ENCODE measurements at regions of chr2 and their contacts with region 1.

Region 1: DNA sequence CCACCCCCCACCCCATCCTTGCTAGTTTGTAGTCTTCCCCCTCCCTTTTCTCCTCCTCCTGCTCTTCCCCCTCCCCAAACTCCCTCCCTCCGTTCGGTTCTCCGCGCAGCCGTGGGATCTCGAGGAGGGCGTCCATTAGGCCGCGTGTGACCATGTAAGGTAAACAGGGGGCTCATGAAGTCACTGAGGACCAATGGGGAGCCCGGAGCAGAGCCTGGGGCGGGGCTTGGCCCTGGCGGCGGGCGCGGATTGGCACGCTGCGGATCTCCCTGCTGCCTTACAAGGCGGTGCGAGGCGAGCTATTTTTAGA is 246 bp upstream of the KLF7 start:
- DNase-seq: peak; percentile 88
- ATAC-seq: peak; percentile 89
- H3K4me3 Mint-ChIP-seq: peak overlapping the region; percentile 95
- H3K27ac Mint-ChIP-seq: peak overlapping the region; percentile 95
- H3K4me1 Mint-ChIP-seq: peaks cover 63% of the 10 kb centered on the region
- H3K27me3 Mint-ChIP-seq: no peaks in the 10 kb centered on the region
- CTCF ChIP-seq: no peak

Region 2: GRCh38 chr2:206085742-206086445 is 1080.1 kb before region 1 on chr2 and contains the start of gene INO80D:
- CTCF ChIA-PET with region 1: no interaction called
- POLR2A ChIA-PET with region 1: interaction called, 3 read pairs
- intact Hi-C with region 1: loop called (anchors 10 kb)
- DNase-seq: peak; percentile 76
- ATAC-seq: peak; percentile 89
- H3K4me3 Mint-ChIP-seq: peak within 1 kb of the TSS; percentile 99
- H3K27ac Mint-ChIP-seq: peak within 1 kb of the TSS; percentile 100
- H3K4me1 Mint-ChIP-seq: peaks cover 42% of the 10 kb centered on the region
- H3K27me3 Mint-ChIP-seq: no peaks in the 10 kb centered on the region
- CTCF ChIP-seq: no peak
- total RNA-seq, gene INO80D: 52.1 and 53.1 TPM in 2 replicates

Region 3: GRCh38 chr2:206989306-206989705 is 176.7 kb before region 1 on chr2:
- CTCF ChIA-PET with region 1: no interaction called
- POLR2A ChIA-PET with region 1: no interaction called
- intact Hi-C with region 1: loop called (anchors 5 kb)
- DNase-seq: no peak
- ATAC-seq: peak; percentile 66
- H3K4me3 Mint-ChIP-seq: no peak overlapping the region
- H3K27ac Mint-ChIP-seq: no peak overlapping the region
- H3K4me1 Mint-ChIP-seq: peaks cover 3% of the 10 kb centered on the region
- H3K27me3 Mint-ChIP-seq: peaks cover 15% of the 10 kb centered on the region
- CTCF ChIP-seq: peak; percentile 33

Region 4: GRCh38 chr2:207133820-207134519 is 32.0 kb before region 1 on chr2:
- CTCF ChIA-PET with region 1: no interaction called
- POLR2A ChIA-PET with region 1: interaction called, 13 read pairs
- intact Hi-C with region 1: no loop called
- DNase-seq: no peak
- ATAC-seq: no peak
- H3K4me3 Mint-ChIP-seq: no peak overlapping the region
- H3K27ac Mint-ChIP-seq: no peak overlapping the region
- H3K4me1 Mint-ChIP-seq: peaks cover 68% of the 10 kb centered on the region
- H3K27me3 Mint-ChIP-seq: no peaks in the 10 kb centered on the region
- CTCF ChIP-seq: no peak

Region 5: GRCh38 chr2:207176247-207176646 is 10.3 kb after region 1 on chr2:
- CTCF ChIA-PET with region 1: no interaction called
- POLR2A ChIA-PET with region 1: interaction called, 13 read pairs
- intact Hi-C with region 1: loop called (anchors 1 kb)
- DNase-seq: no peak
- ATAC-seq: no peak
- H3K4me3 Mint-ChIP-seq: no peak overlapping the region
- H3K27ac Mint-ChIP-seq: no peak overlapping the region
- H3K4me1 Mint-ChIP-seq: peaks cover 14% of the 10 kb centered on the region
- H3K27me3 Mint-ChIP-seq: no peaks in the 10 kb centered on the region
- CTCF ChIP-seq: no peak

Region 6: GRCh38 chr2:207503234-207503633 is 337.2 kb after region 1 on chr2:
- CTCF ChIA-PET with region 1: no interaction called
- POLR2A ChIA-PET with region 1: interaction called, 11 read pairs
- intact Hi-C with region 1: no loop called
- DNase-seq: no peak
- ATAC-seq: peak; percentile 71
- H3K4me3 Mint-ChIP-seq: peak overlapping the region; percentile 42
- H3K27ac Mint-ChIP-seq: peak overlapping the region; percentile 85
- H3K4me1 Mint-ChIP-seq: peaks cover 83% of the 10 kb centered on the region
- H3K27me3 Mint-ChIP-seq: no peaks in the 10 kb centered on the region
- CTCF ChIP-seq: no peak

Region 7: DNA sequence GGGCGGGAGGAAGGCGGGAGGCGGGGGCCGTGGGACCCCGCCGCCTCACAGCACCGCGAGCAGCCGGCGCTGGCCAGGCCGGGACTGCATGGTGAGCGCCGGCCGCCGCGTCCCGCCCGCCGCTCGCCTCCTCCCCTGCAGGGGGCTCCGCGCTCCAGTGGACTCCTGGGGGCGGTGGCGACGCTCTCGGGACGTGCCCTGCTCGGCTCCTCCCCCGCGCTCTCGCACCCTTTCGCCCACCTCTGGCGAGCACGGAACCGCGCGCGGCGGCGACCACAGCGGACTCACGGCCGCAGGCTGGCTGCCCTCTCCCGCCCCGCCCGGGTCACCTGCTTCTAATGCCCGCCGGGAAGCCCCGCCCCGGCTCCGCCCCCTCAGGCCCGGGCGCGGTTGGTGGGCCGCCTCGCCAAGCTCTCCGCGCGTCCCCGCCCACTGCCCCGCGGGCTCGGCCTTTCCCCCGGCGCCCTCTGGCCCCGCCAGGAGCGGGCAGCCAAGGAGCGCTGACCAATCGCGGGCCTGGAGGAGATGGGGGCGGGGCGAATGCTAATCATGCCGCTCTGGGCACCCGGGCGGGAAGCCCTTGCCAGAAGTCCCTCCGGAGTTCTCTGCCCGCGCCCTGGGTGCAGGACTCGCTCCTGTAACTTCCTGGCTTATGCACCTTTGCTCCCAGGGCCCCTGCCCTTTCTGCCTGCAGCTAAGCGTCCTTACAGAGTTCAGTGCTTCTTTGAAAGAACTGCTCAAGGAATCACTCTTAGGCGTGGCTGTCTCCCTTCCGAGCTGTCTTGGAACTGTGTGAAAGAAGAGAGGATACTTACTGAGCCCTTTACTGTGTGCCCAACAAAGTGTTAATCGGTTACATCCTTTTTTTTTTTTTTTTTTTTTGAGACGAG is 603.8 kb after region 1 on chr2 and contains the start of gene FZD5:
- CTCF ChIA-PET with region 1: no interaction called
- POLR2A ChIA-PET with region 1: interaction called, 5 read pairs
- intact Hi-C with region 1: loop called (anchors 2 kb)
- DNase-seq: peak; percentile 93
- ATAC-seq: peak; percentile 91
- H3K4me3 Mint-ChIP-seq: peak within 1 kb of the TSS; percentile 87
- H3K27ac Mint-ChIP-seq: no peak within 1 kb of the TSS
- H3K4me1 Mint-ChIP-seq: peaks cover 36% of the 10 kb centered on the region
- H3K27me3 Mint-ChIP-seq: peaks cover 7% of the 10 kb centered on the region
- CTCF ChIP-seq: no peak
- total RNA-seq, gene FZD5: 0.66 and 0.89 TPM in 2 replicates